Activated CD4-positive, alpha-beta memory T cell treated with anti-CD3 and anti-CD28 coated beads for 36 hours (primary cell): ENCODE measurements at regions of chr9 and their contacts with region 1.

Region 1: GRCh38 chr9:122350638-122351355 is 20.0 kb upstream of the PTGS1 start:
- DNase-seq: peak; percentile 85
- H3K4me3 Mint-ChIP-seq: no peak overlapping the region
- H3K27ac Mint-ChIP-seq: no peak overlapping the region
- H3K4me1 Mint-ChIP-seq: peaks cover 4% of the 10 kb centered on the region
- H3K27me3 Mint-ChIP-seq: peaks cover 32% of the 10 kb centered on the region

Region 2: GRCh38 chr9:122092611-122093506 is 257.9 kb before region 1 on chr9 and contains the start of gene TTLL11:
- CTCF ChIA-PET with region 1: interaction called, 117 read pairs
- POLR2A ChIA-PET with region 1: no interaction called
- intact Hi-C with region 1: loop called (anchors 1 kb)
- DNase-seq: peak; percentile 97
- H3K4me3 Mint-ChIP-seq: peak within 1 kb of the TSS; percentile 79
- H3K27ac Mint-ChIP-seq: no peak within 1 kb of the TSS
- H3K4me1 Mint-ChIP-seq: peaks cover 33% of the 10 kb centered on the region
- H3K27me3 Mint-ChIP-seq: peaks cover 5% of the 10 kb centered on the region
- total RNA-seq, gene TTLL11: 0.97 TPM

Region 3: GRCh38 chr9:122213589-122214413 is 137.0 kb before region 1 on chr9:
- CTCF ChIA-PET with region 1: no interaction called
- POLR2A ChIA-PET with region 1: no interaction called
- intact Hi-C with region 1: loop called (anchors 10 kb)
- DNase-seq: peak; percentile 69
- H3K4me3 Mint-ChIP-seq: peak overlapping the region; percentile 38
- H3K27ac Mint-ChIP-seq: no peak overlapping the region
- H3K4me1 Mint-ChIP-seq: peaks cover 13% of the 10 kb centered on the region
- H3K27me3 Mint-ChIP-seq: peaks cover 68% of the 10 kb centered on the region

Region 4: GRCh38 chr9:122364783-122365150 is 14.0 kb after region 1 on chr9:
- CTCF ChIA-PET with region 1: interaction called, 15 read pairs
- POLR2A ChIA-PET with region 1: no interaction called
- intact Hi-C with region 1: no loop called
- DNase-seq: no peak
- H3K4me3 Mint-ChIP-seq: no peak overlapping the region
- H3K27ac Mint-ChIP-seq: no peak overlapping the region
- H3K4me1 Mint-ChIP-seq: no peaks in the 10 kb centered on the region
- H3K27me3 Mint-ChIP-seq: peaks cover 4% of the 10 kb centered on the region

Region 5: DNA sequence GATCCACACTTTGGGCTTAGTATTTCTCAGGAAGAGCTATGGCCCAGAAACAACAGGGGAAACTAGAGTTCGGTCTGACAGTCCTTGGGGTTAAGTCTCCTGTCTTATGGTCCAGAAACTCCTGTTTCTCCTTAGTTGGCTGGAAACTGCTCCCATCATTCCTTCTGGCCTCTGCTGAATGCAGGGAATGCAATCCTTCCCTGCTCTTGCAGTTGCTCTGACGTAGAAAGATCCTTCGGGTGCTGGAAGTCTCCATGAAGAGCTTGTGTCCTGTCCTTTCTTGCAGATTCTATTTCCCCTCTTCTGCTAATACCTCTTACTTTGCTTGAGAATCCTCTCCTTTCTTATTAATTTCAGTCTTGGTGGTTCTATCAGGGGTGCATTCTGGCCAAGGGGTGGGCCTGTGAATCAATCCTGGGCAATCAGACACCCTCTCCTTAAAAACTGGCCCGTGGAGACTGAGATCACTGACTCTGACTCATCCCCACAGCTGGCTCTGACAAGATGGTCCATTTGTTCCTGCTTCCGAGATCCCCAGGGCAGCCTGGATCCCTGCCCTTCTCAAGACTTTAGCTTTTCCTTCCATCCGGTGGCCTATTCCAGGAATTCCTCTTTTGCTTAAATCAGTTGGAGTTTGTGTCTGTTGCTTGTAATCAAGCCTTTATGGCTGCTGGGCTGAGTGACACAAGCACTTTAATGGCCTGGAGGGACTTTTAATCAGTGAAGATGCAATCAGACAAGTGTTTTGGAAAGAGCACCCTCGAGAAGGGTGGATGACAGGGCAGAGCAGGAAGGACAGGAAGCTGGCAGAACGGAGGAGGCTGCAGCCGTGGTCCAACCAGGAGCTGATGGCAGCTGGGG is 43.7 kb after region 1 on chr9:
- CTCF ChIA-PET with region 1: no interaction called
- POLR2A ChIA-PET with region 1: no interaction called
- intact Hi-C with region 1: no loop called
- DNase-seq: no peak
- H3K4me3 Mint-ChIP-seq: no peak overlapping the region
- H3K27ac Mint-ChIP-seq: no peak overlapping the region
- H3K4me1 Mint-ChIP-seq: no peaks in the 10 kb centered on the region
- H3K27me3 Mint-ChIP-seq: peaks cover 12% of the 10 kb centered on the region

Region 6: DNA sequence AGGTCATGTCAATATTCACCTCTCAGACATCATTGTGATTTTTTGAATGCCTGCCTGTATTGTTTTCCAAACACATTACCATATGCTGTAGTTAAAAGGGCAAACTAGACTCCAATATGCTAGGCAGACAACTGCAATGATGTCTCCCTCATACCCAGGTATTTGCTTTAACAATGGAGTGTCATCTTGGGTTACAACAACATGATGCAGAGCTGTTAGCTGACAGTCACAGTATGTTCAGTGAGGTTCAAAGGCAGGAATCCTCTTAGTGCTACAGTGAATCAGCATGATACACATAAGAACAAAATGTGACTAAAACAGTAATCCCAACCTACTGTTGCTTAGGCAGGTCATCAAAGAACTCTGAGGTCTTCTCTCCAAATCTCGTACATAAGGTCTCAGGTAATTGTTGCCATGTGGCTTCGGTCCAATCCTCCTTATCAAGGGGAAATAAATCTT is 102.9 kb after region 1 on chr9:
- CTCF ChIA-PET with region 1: no interaction called
- POLR2A ChIA-PET with region 1: no interaction called
- intact Hi-C with region 1: loop called (anchors 5 kb)
- DNase-seq: no peak
- H3K4me3 Mint-ChIP-seq: no peak overlapping the region
- H3K27ac Mint-ChIP-seq: no peak overlapping the region
- H3K4me1 Mint-ChIP-seq: no peaks in the 10 kb centered on the region
- H3K27me3 Mint-ChIP-seq: peaks cover 8% of the 10 kb centered on the region